ENCODE measurements at regions of chr3 and their contacts with region 1.

Region 1: DNA sequence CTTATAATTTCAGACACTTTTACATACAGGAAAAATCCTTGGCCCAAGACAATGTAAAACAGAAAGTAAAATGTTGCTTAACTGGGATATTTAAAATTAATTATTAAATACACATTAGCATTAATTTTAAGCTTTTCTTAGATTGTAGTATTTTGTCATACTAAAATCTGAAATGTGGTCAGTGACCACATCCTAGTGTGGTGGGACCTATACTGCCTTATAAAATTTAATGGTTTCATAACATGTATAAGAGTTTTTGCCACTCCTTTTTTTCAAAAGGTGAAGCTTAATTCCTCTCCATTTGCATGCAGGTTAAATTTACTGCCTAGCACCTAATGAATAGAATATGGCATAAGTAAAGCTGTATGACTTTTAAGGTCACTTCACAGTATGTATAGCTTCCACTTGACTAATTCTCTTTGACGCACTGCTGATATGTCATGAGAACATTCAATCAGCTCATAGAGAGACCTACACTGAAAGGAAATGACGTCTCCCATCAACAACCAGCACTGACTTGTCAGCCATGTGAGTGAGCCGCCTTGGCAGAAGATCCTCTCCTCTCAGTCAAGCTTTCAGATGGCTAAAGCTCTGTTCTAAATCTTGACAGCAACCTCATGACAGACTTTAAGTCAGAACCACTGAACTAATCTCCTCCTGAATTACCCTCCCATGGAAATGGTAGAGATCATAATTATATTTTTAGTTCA is 847.8 kb downstream of the SI start:
- DNase-seq: no peak
- ATAC-seq: no peak
- H3K4me3 ChIP-seq: no peak overlapping the region
- H3K27ac ChIP-seq: no peak overlapping the region
- H3K4me1 ChIP-seq: no peaks in the 10 kb centered on the region
- H3K27me3 ChIP-seq: no peaks in the 10 kb centered on the region
- CTCF ChIP-seq: no peak

Region 2: GRCh38 chr3:164208821-164209220 is 21.7 kb before region 1 on chr3:
- CTCF ChIA-PET with region 1: no interaction called
- POLR2A ChIA-PET with region 1: no interaction called
- in situ Hi-C with region 1: no loop called
- intact Hi-C with region 1: loop called (anchors 2 kb)
- DNase-seq: no peak
- ATAC-seq: no peak
- H3K4me3 ChIP-seq: no peak overlapping the region
- H3K27ac ChIP-seq: no peak overlapping the region
- H3K4me1 ChIP-seq: no peaks in the 10 kb centered on the region
- H3K27me3 ChIP-seq: no peaks in the 10 kb centered on the region
- CTCF ChIP-seq: no peak

Region 3: DNA sequence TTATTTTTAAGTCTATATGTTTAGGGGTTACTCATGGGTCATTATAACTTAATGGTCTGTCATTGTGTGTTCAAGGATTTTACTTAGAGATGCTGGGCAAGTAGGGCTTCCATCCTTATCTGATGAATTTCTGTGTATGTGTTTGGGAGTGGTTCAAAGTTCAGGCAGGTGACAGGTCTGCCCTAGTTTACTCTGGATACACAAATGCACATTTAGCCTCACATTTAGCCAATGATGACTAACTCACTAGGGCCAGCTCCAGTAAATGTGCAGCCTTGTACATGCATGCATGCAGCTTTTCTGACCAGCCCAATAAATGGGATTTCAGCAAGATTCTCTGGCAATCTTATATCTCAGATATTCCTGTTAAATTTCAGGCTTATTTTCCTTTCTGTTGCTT is 293.7 kb after region 1 on chr3:
- CTCF ChIA-PET with region 1: no interaction called
- POLR2A ChIA-PET with region 1: no interaction called
- in situ Hi-C with region 1: no loop called
- intact Hi-C with region 1: no loop called
- DNase-seq: no peak
- ATAC-seq: no peak
- H3K4me3 ChIP-seq: no peak overlapping the region
- H3K27ac ChIP-seq: no peak overlapping the region
- H3K4me1 ChIP-seq: no peaks in the 10 kb centered on the region
- H3K27me3 ChIP-seq: no peaks in the 10 kb centered on the region
- CTCF ChIP-seq: no peak

Measured in Panc1 (cell line).